PC-9 (cell line): ENCODE measurements at regions of chr9 and their contacts with region 1.

Region 1: DNA sequence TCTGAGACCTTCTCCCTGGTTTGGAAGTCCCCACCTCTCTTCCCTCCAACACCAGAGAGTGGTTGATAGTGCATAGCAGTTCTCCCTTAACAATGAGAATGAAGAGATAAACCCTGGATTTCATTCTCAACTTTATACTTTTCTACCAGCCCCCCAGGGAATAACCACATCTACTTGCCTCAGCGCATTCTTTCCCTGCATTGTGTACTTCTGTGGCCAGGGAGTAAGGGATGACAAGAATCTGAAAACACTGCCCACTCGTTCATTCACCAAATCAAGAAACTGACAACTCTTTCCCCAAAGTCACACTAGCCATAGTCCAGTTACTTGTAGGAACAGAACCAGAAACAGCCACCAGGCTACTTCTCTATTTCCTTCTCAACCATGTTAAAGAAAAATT is 46.0 kb upstream of the SPIN1 start:
- DNase-seq: no peak
- H3K4me3 ChIP-seq: no peak overlapping the region
- H3K27ac ChIP-seq: no peak overlapping the region
- H3K4me1 ChIP-seq: peaks cover 23% of the 10 kb centered on the region
- H3K27me3 ChIP-seq: no peaks in the 10 kb centered on the region
- CTCF ChIP-seq: no peak

Region 2: DNA sequence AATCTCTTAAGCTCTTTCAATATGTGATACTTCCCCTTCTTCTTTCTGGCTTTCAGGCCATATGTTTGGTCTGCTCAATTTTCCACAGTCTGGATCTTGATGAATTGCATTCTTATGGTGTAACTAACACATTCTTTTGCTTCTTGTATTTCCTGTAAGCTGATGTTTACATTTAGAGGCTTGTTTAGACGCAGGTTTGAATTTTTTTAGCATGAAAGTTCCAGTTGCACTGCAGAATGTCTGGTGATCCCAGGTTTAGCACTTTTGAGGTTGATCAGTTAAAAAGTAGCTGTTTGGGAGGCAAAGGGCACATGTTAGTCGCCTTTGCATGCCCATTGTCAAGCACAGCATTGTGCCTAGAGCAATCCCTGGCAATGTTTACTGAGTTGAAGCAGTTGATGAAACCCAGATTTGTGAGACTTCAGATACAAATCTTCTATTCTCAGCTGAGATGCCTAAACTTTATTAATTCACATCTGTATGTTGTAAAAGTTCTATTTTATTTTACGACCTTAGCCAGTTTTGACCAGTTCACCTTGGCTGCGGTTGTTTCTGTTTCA is 144.4 kb before region 1 on chr9:
- CTCF ChIA-PET with region 1: no interaction called
- POLR2A ChIA-PET with region 1: no interaction called
- intact Hi-C with region 1: loop called (anchors 5 kb)
- DNase-seq: peak; percentile 46 to 98
- H3K4me3 ChIP-seq: peak overlapping the region; percentile 43; the same call in 1 of the 2 replicates
- H3K27ac ChIP-seq: peak overlapping the region; percentile 96
- H3K4me1 ChIP-seq: peaks cover 47% of the 10 kb centered on the region
- H3K27me3 ChIP-seq: no peaks in the 10 kb centered on the region
- CTCF ChIP-seq: no peak

Region 3: DNA sequence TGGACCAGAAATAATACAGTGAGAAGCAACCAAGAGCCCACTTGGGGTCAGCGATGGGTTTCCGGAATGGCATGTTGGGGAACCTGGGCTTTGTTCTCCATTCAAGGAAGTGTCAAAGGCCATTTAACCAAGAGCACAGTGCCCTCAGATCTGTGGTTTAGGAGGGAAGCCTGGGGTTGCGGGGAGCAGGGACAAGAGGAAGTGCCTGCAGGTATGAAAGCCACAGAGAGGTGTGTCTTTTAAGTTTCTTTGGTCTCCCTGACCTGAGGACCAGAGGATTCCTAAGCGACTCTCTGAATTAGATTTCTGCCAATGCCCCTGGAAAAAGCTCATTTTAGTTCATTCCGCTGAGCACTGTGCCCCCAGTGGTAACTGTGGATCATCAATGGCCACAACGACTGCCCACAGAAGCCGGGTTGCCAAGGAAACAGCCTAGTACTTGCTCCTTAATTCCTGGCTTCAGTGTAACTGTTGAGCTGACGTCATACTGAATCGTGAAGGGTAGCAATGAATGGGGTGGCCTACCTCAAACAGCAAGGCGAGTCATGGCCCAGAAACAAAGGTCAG is 61.3 kb before region 1 on chr9:
- CTCF ChIA-PET with region 1: no interaction called
- POLR2A ChIA-PET with region 1: no interaction called
- intact Hi-C with region 1: loop called (anchors 1 kb)
- DNase-seq: peak; percentile 77 to 83
- H3K4me3 ChIP-seq: peak overlapping the region; percentile 14; the same call in 1 of the 2 replicates
- H3K27ac ChIP-seq: peak overlapping the region; percentile 60
- H3K4me1 ChIP-seq: peaks cover 30% of the 10 kb centered on the region
- H3K27me3 ChIP-seq: no peaks in the 10 kb centered on the region
- CTCF ChIP-seq: 0 out of 2 replicates have a peak, but pooled peaks have one; percentile 26

Region 4: DNA sequence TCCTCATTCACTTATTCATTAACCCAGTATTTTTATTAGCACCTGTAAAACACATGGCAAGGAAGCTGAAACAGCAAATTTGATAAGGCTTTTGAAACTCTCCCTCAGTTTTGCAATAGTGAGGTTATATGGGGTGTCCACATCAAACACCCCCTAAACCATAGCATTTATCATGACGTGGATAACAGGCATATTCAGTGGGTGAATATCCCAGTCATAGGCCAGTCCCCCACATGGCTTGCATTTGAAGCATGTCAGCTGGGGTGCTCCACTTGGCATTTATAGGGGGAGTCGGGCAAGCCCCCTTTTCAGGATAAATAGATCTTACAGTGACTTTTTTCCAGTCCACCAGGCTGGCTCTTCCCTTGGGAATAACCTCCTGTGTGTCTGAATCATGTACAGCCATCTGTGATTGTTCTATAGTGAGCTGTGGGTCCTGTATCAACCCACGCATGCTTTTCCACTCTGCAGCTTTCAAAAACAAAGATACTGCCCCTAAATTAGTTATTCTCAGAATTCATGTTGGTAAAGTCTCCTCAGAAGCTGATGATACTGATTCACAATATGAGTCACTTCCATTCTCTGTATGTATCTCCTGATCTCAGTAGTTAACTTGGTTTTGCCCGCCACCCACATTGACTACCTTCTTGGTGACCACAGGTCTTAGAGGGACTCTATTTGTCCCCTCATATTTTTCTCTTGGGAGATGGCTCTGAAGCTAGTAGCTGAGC is 38.4 kb before region 1 on chr9:
- CTCF ChIA-PET with region 1: no interaction called
- POLR2A ChIA-PET with region 1: no interaction called
- intact Hi-C with region 1: no loop called
- DNase-seq: no peak
- H3K4me3 ChIP-seq: no peak overlapping the region
- H3K27ac ChIP-seq: no peak overlapping the region
- H3K4me1 ChIP-seq: no peaks in the 10 kb centered on the region
- H3K27me3 ChIP-seq: no peaks in the 10 kb centered on the region
- CTCF ChIP-seq: no peak

Region 5: DNA sequence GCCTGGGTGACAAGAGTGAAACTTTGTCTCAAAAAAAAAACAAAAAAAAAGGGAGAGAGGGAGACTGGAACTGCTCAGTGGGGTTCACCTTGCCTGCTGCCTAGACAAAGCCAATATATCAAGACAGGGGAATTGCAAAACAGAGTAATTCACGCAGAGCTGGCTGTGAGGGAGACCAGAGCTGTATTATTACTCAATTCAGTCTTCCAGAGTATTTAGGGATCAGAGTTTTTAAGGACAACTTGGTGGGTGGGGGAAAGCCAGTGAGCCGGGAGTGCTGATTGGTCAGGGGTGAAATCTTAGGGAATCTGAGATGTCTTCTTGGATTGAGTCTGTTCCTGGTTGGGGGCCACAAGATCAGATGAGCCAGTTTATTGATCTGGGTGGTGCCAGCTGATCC is 20.4 kb after region 1 on chr9:
- CTCF ChIA-PET with region 1: no interaction called
- POLR2A ChIA-PET with region 1: no interaction called
- intact Hi-C with region 1: no loop called
- DNase-seq: no peak
- H3K4me3 ChIP-seq: no peak overlapping the region
- H3K27ac ChIP-seq: no peak overlapping the region
- H3K4me1 ChIP-seq: peaks cover 6% of the 10 kb centered on the region; the same call in 1 of the 2 replicates
- H3K27me3 ChIP-seq: no peaks in the 10 kb centered on the region
- CTCF ChIP-seq: no peak